Vagina (tissue), 2 donors: ENCODE measurements at regions of chr1 and their contacts with region 1.

Region 1: GRCh38 chr1:7120863-7121621 is 335.8 kb downstream of the CAMTA1 start:
- DNase-seq: no peak
- H3K4me3 ChIP-seq: no peak overlapping the region
- H3K27ac ChIP-seq: no peak overlapping the region
- H3K4me1 ChIP-seq: no peaks in the 10 kb centered on the region
- H3K27me3 ChIP-seq: no peaks in the 10 kb centered on the region
- CTCF ChIP-seq: no peak
- POLR2A ChIP-seq: no peak

Region 2: GRCh38 chr1:6602669-6603237 is 518.3 kb before region 1 on chr1 and contains the start of gene KLHL21:
- intact Hi-C with region 1: no loop called
- DNase-seq: no peak
- H3K4me3 ChIP-seq: peak within 1 kb of the TSS; percentile 59 to 74
- H3K27ac ChIP-seq: peak within 1 kb of the TSS; percentile 98
- H3K4me1 ChIP-seq: peaks cover 52% of the 10 kb centered on the region
- H3K27me3 ChIP-seq: no peaks in the 10 kb centered on the region
- CTCF ChIP-seq: no peak
- POLR2A ChIP-seq: peak; percentile 4 to 72
- total RNA-seq, gene KLHL21: 54.3 TPM

Region 3: DNA sequence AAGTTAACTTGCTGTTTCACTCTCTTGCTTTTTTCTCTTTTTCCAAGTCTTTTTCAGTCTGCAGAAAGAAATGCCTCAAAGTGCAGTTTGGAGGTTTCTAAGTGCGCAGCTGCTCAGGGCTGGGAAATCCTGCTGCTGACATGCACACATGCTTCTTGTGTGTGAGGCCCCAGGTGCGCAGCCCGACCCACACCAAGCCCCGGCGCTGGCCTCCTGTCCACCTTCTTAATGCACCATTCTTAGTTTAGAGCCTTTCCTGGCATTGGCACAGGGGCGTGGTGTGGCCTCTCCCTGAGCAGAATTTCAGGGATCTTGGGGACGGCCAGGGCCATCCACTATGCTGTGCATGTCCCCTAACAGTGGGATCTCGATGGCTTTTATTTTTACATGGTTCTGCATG is 20.6 kb before region 1 on chr1:
- intact Hi-C with region 1: loop called (anchors 1 kb)
- DNase-seq: no peak
- H3K4me3 ChIP-seq: no peak overlapping the region
- H3K27ac ChIP-seq: no peak overlapping the region
- H3K4me1 ChIP-seq: no peaks in the 10 kb centered on the region
- H3K27me3 ChIP-seq: no peaks in the 10 kb centered on the region
- CTCF ChIP-seq: no peak
- POLR2A ChIP-seq: no peak

Region 4: GRCh38 chr1:9110669-9111356 is 1989.8 kb after region 1 on chr1:
- intact Hi-C with region 1: no loop called
- DNase-seq: peak in 1 of 2 donors; percentile 94
- H3K4me3 ChIP-seq: no peak overlapping the region
- H3K27ac ChIP-seq: peak overlapping the region; percentile 3
- H3K4me1 ChIP-seq: peaks cover 16% of the 10 kb centered on the region
- H3K27me3 ChIP-seq: no peaks in the 10 kb centered on the region
- CTCF ChIP-seq: peak; percentile 90 to 95 (median 90)
- POLR2A ChIP-seq: no peak